CD4-positive, alpha-beta memory T cell (primary cell): ENCODE measurements at regions of chr4 and their contacts with region 1.

Region 1: GRCh38 chr4:98467627-98468072 is 190.8 kb downstream of the TSPAN5 start:
- DNase-seq: peak; percentile 65 to 71 (median 66)
- H3K4me3 ChIP-seq: peak overlapping the region in 1 of 2 donors; percentile 47
- H3K4me3 Mint-ChIP-seq: peak overlapping the region; percentile 64 to 86 (median 79)
- H3K27ac ChIP-seq: no peak overlapping the region
- H3K27ac Mint-ChIP-seq: peak overlapping the region in 4 of 7 donors; percentile 27 to 74 (median 43)
- H3K4me1 ChIP-seq: peaks cover 19% of the 10 kb centered on the region
- H3K4me1 Mint-ChIP-seq: peaks cover 15 to 32% (median 24%) of the 10 kb centered on the region in 4 donors
- H3K27me3 ChIP-seq: no peaks in the 10 kb centered on the region
- H3K27me3 Mint-ChIP-seq: no peaks in the 10 kb centered on the region

Region 2: GRCh38 chr4:98446499-98447375 is 20.9 kb before region 1 on chr4:
- CTCF ChIA-PET with region 1: interaction called, 11 read pairs
- POLR2A ChIA-PET with region 1: interaction called, 4 read pairs
- intact Hi-C with region 1: no loop called
- DNase-seq: peak; percentile 74 to 78 (median 77)
- H3K4me3 ChIP-seq: peak overlapping the region in 1 of 2 donors; percentile 3
- H3K4me3 Mint-ChIP-seq: peak overlapping the region; percentile 61 to 88 (median 78)
- H3K27ac ChIP-seq: peak overlapping the region; percentile 37
- H3K27ac Mint-ChIP-seq: peak overlapping the region; percentile 76 to 93 (median 91)
- H3K4me1 ChIP-seq: peaks cover 48% of the 10 kb centered on the region
- H3K4me1 Mint-ChIP-seq: peaks cover 37 to 47% (median 40%) of the 10 kb centered on the region in 4 donors
- H3K27me3 ChIP-seq: no peaks in the 10 kb centered on the region
- H3K27me3 Mint-ChIP-seq: no peaks in the 10 kb centered on the region

Region 3: GRCh38 chr4:98482847-98483806 is 15.5 kb after region 1 on chr4:
- CTCF ChIA-PET with region 1: interaction called, 16 read pairs
- POLR2A ChIA-PET with region 1: no interaction called
- intact Hi-C with region 1: no loop called
- DNase-seq: no peak
- H3K4me3 ChIP-seq: no peak overlapping the region
- H3K4me3 Mint-ChIP-seq: peak overlapping the region in 2 of 8 donors; percentile 28 to 37
- H3K27ac ChIP-seq: no peak overlapping the region
- H3K27ac Mint-ChIP-seq: peak overlapping the region in 6 of 7 donors; percentile 44 to 78 (median 62)
- H3K4me1 ChIP-seq: peaks cover 19% of the 10 kb centered on the region
- H3K4me1 Mint-ChIP-seq: peaks cover 17 to 49% (median 38%) of the 10 kb centered on the region in 4 donors
- H3K27me3 ChIP-seq: no peaks in the 10 kb centered on the region
- H3K27me3 Mint-ChIP-seq: no peaks in the 10 kb centered on the region

Region 4: GRCh38 chr4:98828801-98829200 is 361.2 kb after region 1 on chr4:
- CTCF ChIA-PET with region 1: interaction called, 14 read pairs
- POLR2A ChIA-PET with region 1: no interaction called
- intact Hi-C with region 1: no loop called
- DNase-seq: peak in 4 of 5 donors; percentile 6 to 27 (median 22)
- H3K4me3 ChIP-seq: no peak overlapping the region
- H3K4me3 Mint-ChIP-seq: no peak overlapping the region
- H3K27ac ChIP-seq: no peak overlapping the region
- H3K27ac Mint-ChIP-seq: no peak overlapping the region
- H3K4me1 ChIP-seq: no peaks in the 10 kb centered on the region
- H3K4me1 Mint-ChIP-seq: peaks cover 0 to 3% (median 0%) of the 10 kb centered on the region in 4 donors
- H3K27me3 ChIP-seq: no peaks in the 10 kb centered on the region
- H3K27me3 Mint-ChIP-seq: no peaks in the 10 kb centered on the region

Region 5: GRCh38 chr4:99405433-99406115 is 937.9 kb after region 1 on chr4:
- CTCF ChIA-PET with region 1: interaction called, 11 read pairs
- POLR2A ChIA-PET with region 1: no interaction called
- intact Hi-C with region 1: loop called (anchors 1 kb)
- DNase-seq: peak; percentile 43 to 60 (median 49)
- H3K4me3 ChIP-seq: no peak overlapping the region
- H3K4me3 Mint-ChIP-seq: no peak overlapping the region
- H3K27ac ChIP-seq: no peak overlapping the region
- H3K27ac Mint-ChIP-seq: no peak overlapping the region
- H3K4me1 ChIP-seq: no peaks in the 10 kb centered on the region
- H3K4me1 Mint-ChIP-seq: peaks cover 0 to 4% (median 2%) of the 10 kb centered on the region in 4 donors
- H3K27me3 ChIP-seq: no peaks in the 10 kb centered on the region
- H3K27me3 Mint-ChIP-seq: peaks cover 0 to 1% of the 10 kb centered on the region in 2 donors